ENCODE measurements at regions of chr2 and their contacts with region 1.

Region 1: GRCh38 chr2:102020596-102021181 is 28.9 kb downstream of the IL1R2 start:
- DNase-seq: peak; percentile 67
- ATAC-seq: peak; percentile 99
- H3K4me3 Mint-ChIP-seq: no peak overlapping the region
- H3K27ac Mint-ChIP-seq: no peak overlapping the region
- H3K4me1 Mint-ChIP-seq: peaks cover 3% of the 10 kb centered on the region
- H3K27me3 Mint-ChIP-seq: peaks cover 8% of the 10 kb centered on the region
- CTCF ChIP-seq: peak; percentile 28

Region 2: DNA sequence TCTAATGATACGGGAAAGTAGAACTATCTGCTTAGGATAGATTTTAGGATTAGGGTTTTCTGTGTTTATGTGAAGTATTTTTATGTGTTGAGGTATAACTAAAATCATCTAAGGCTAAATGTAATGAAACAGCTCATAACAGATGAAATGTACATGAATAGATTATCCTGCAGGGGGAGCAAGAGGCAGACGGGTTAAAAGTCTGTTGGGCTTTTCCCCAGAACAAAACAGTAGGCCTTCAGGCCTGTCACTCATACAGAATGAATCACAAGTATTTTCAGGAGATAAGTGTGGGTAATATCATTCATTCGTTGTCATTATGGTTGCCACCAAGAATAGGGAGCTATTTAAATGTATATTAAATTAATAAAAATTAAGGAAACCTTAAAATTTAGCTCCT is 136.8 kb before region 1 on chr2:
- CTCF ChIA-PET with region 1: interaction called, 19 read pairs
- POLR2A ChIA-PET with region 1: no interaction called
- intact Hi-C with region 1: loop called (anchors 2 kb)
- DNase-seq: no peak
- ATAC-seq: peak; percentile 67
- H3K4me3 Mint-ChIP-seq: no peak overlapping the region
- H3K27ac Mint-ChIP-seq: no peak overlapping the region
- H3K4me1 Mint-ChIP-seq: peaks cover 2% of the 10 kb centered on the region
- H3K27me3 Mint-ChIP-seq: no peaks in the 10 kb centered on the region
- CTCF ChIP-seq: no peak

Region 3: DNA sequence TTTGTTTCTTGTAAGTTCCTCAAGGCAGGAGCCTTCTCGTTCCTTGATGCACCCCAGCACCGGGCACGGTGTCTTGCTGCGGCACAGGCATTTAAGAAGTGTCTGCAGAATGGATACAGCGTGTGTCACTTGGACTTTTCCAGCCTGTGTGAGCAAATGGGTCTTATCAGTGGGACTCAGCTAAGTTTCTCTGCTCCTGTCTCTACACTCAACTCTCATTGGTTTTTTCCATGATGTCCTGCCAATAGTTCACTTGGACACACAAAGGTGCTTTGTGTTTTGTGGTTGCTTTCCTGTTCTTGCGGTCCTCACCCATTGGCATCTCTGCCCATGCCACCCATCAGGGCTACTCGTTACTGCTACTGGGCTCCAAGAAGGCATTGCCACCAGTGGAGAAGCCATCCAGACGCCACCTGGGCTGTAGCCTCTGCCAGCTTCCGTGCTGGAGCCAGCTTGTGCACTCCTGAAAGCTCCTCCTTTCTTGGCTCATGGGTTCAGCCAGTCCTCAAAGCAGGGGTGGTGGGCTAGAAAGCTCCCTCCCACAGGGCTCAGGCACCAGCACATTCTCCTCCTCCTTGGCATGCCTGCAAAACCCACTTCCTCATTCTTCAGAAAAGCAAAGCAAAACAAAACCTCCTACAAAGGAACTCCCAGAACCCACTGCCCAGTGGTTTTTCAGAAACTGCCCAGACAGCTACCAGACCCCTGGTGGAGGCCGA is 12.5 kb after region 1 on chr2:
- CTCF ChIA-PET with region 1: interaction called, 10 read pairs
- POLR2A ChIA-PET with region 1: no interaction called
- intact Hi-C with region 1: no loop called
- DNase-seq: peak; percentile 19
- ATAC-seq: peak; percentile 61
- H3K4me3 Mint-ChIP-seq: peak overlapping the region; percentile 21
- H3K27ac Mint-ChIP-seq: peak overlapping the region; percentile 30
- H3K4me1 Mint-ChIP-seq: peaks cover 20% of the 10 kb centered on the region
- H3K27me3 Mint-ChIP-seq: peaks cover 2% of the 10 kb centered on the region
- CTCF ChIP-seq: no peak

Region 4: DNA sequence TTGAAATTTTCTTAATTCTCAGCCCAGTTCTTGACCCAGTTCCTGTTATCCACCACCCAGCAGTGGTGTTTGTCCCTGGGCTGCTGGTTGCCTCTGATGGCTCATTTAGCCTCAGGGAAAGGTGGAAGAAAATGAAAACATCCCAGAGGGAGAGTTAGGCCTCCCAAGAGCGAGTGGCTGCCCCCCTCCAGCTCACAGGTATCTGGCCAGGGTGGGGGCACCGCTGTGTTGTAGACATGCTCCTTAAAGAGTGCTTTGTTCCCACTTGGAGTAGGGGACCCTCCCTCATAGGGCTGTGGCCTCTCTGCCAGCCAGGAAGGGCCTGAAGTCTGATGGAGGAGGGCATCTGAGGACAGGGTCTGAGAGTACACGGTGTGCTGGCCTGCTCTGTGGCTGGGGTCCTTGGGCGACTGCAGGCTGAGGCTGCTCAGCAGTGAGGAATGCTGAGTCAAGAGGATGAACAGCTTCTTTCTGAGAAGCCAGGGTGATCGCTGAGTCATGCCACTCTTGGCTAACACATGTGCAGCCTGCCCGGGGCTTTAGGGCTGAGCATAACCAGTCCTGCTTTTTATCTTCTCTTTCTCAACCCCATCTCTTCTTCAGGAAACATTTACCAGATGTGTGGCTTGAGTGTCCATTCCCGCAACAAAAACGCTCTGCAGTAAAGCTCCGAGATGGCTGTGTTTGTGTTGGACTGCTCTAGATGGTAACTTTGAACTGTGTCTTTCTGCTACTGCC is 43.4 kb after region 1 on chr2:
- CTCF ChIA-PET with region 1: no interaction called
- POLR2A ChIA-PET with region 1: no interaction called
- intact Hi-C with region 1: no loop called
- DNase-seq: no peak
- ATAC-seq: no peak
- H3K4me3 Mint-ChIP-seq: no peak overlapping the region
- H3K27ac Mint-ChIP-seq: no peak overlapping the region
- H3K4me1 Mint-ChIP-seq: no peaks in the 10 kb centered on the region
- H3K27me3 Mint-ChIP-seq: peaks cover 26% of the 10 kb centered on the region
- CTCF ChIP-seq: no peak

Region 5: GRCh38 chr2:102141970-102142828 is 121.5 kb after region 1 on chr2 and contains the start of gene IL1R1:
- CTCF ChIA-PET with region 1: no interaction called
- POLR2A ChIA-PET with region 1: no interaction called
- intact Hi-C with region 1: no loop called
- DNase-seq: no peak
- ATAC-seq: no peak
- H3K4me3 Mint-ChIP-seq: no peak within 1 kb of the TSS
- H3K27ac Mint-ChIP-seq: no peak within 1 kb of the TSS
- H3K4me1 Mint-ChIP-seq: peaks cover 4% of the 10 kb centered on the region
- H3K27me3 Mint-ChIP-seq: peaks cover 40% of the 10 kb centered on the region
- CTCF ChIP-seq: no peak
- total RNA-seq, gene IL1R1: not detected in 2 replicates

Region 6: GRCh38 chr2:102355526-102356380 is 335.1 kb after region 1 on chr2 and contains the start of gene IL18R1:
- CTCF ChIA-PET with region 1: no interaction called
- POLR2A ChIA-PET with region 1: no interaction called
- intact Hi-C with region 1: loop called (anchors 1 kb)
- DNase-seq: peak; percentile 67
- ATAC-seq: peak; percentile 91
- H3K4me3 Mint-ChIP-seq: peak within 1 kb of the TSS; percentile 90
- H3K27ac Mint-ChIP-seq: peak within 1 kb of the TSS; percentile 86
- H3K4me1 Mint-ChIP-seq: peaks cover 25% of the 10 kb centered on the region
- H3K27me3 Mint-ChIP-seq: no peaks in the 10 kb centered on the region
- CTCF ChIP-seq: no peak
- total RNA-seq, gene IL18R1: 1.7 and 2.2 TPM in 2 replicates

Region 7: GRCh38 chr2:102442967-102443828 is 422.5 kb after region 1 on chr2:
- CTCF ChIA-PET with region 1: interaction called, 19 read pairs
- POLR2A ChIA-PET with region 1: no interaction called
- intact Hi-C with region 1: loop called (anchors 1 kb)
- DNase-seq: no peak
- ATAC-seq: peak; percentile 49
- H3K4me3 Mint-ChIP-seq: no peak overlapping the region
- H3K27ac Mint-ChIP-seq: no peak overlapping the region
- H3K4me1 Mint-ChIP-seq: peaks cover 2% of the 10 kb centered on the region
- H3K27me3 Mint-ChIP-seq: no peaks in the 10 kb centered on the region
- CTCF ChIP-seq: no peak

Region 8: GRCh38 chr2:102449370-102449974 is 428.8 kb after region 1 on chr2:
- CTCF ChIA-PET with region 1: interaction called, 19 read pairs
- POLR2A ChIA-PET with region 1: no interaction called
- intact Hi-C with region 1: loop called (anchors 1 kb)
- DNase-seq: peak; percentile 21
- ATAC-seq: no peak
- H3K4me3 Mint-ChIP-seq: no peak overlapping the region
- H3K27ac Mint-ChIP-seq: no peak overlapping the region
- H3K4me1 Mint-ChIP-seq: no peaks in the 10 kb centered on the region
- H3K27me3 Mint-ChIP-seq: peaks cover 5% of the 10 kb centered on the region
- CTCF ChIP-seq: no peak

Region 9: GRCh38 chr2:102592597-102592996 is 571.9 kb after region 1 on chr2:
- CTCF ChIA-PET with region 1: no interaction called
- POLR2A ChIA-PET with region 1: no interaction called
- intact Hi-C with region 1: loop called (anchors 1 kb)
- DNase-seq: no peak
- ATAC-seq: no peak
- H3K4me3 Mint-ChIP-seq: no peak overlapping the region
- H3K27ac Mint-ChIP-seq: no peak overlapping the region
- H3K4me1 Mint-ChIP-seq: no peaks in the 10 kb centered on the region
- H3K27me3 Mint-ChIP-seq: peaks cover 13% of the 10 kb centered on the region
- CTCF ChIP-seq: no peak